Right ventricle myocardium superior (tissue), 1 donor: ENCODE measurements at regions of chr12 and their contacts with region 1.

Region 1: DNA sequence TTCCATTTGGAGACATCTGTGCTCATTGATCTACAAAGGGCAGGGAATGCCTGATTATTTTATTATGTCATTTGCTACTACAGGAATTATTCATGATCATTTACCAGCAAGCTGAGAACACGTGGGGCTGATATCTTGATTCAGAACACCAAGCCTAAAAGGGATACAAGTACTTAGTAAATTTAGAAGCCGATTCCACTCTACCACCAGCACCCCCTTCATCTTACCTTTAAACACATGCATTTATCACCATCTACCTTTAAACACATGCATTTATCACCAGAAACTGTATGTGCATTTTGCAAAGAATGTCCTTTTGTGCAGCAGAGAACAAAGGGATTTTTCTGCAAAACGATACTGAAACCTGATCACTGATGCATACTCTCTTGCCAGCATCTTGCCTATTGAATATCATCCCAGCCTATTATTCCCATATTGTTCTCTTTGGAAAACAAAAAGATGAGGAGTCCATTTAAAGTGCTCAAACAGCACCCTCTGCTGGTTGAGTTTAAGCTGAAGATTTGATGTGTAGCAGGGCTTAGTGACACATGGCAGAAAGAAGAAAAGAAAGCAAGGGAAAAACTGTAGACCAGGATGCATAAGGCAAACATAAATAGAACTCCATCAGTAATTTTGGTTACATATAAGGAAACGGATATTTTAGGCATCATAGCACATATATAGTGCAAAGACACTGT is 132.6 kb upstream of the PLEKHG7 start:
- DNase-seq: no peak
- ATAC-seq: peak; percentile 91

Region 2: DNA sequence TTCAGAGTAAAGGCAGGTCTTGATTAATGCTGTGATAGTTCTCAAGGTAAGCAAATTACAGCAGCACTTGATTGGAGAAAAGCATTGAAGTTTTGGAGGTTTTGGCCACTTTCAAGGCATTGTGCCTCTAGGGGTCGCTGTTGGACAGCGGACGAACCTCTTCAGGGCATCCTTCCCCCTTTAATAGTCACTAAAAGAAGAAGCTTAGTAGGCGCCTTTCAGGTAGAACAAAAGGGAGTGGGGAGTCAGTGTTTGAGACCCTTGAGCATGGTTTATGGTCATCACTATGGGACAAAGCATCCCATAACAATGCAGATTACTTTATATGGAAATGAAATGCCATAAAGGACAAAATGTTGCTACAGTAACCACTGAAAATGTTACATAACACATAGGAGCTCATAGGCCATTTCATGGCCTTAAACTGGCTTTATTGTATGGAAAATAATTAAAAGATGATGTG is 1188.1 kb before region 1 on chr12:
- intact Hi-C with region 1: loop called (anchors 5 kb)
- DNase-seq: peak; percentile 85
- ATAC-seq: peak; percentile 91

Region 3: DNA sequence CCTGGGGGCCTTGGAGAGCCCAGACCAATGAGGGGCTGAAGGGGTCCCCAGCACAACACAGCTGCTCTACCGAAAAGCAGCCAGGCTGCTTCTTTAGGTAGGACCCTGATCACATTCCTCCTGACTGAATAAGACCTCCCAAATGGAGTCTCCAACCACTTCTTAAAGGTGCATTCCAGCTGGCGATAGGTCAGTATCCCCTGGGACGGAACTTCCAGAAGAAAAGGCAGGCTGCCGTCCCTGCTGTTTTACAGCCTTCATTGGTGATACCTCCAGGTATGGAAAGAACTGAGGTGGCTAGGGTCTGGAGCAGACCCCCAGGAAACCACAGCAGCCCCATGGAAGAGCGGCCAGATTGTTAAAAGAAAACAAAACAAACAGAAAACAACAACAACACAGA is 765.2 kb before region 1 on chr12:
- intact Hi-C with region 1: loop called (anchors 5 kb)
- DNase-seq: no peak
- ATAC-seq: no peak

Region 4: DNA sequence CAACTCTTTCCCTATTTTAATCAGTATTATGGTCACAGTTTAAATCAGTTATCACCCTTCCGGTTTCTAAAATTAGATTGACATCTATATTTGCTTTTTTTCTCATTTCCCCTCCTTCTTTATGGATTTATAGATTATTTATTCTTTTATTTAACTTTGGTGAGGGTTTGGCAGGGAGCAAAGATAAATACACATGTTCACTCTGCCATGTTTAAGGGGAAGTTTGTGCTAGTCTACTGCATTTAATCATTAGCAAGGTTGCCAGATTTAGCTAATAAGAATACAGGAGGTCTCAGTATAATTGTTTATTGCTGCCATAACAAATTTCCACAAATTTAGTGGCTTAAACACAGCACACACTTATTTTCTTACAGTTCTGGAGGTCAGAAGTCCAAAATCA is 220.6 kb before region 1 on chr12:
- intact Hi-C with region 1: no loop called
- DNase-seq: no peak
- ATAC-seq: no peak

Region 5: DNA sequence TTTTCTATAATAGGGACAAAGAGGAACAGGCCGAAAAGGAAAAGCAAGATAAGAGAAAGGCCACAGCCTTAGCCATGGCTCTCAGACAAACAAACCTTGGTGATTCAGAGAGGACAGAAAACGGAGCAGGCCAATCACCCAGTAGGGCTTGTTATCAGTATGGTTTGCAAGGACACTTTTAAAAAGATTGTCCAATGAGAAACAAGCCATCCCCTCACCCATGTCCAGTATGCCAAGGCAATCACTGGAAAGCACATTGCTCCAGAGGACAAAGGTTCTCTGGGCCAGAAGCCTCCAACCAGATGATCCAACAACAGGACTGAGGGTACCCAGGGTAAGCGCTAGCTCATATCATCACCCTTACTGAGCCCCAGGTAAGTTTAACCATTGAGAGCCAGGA is 180.7 kb before region 1 on chr12:
- intact Hi-C with region 1: no loop called
- DNase-seq: no peak
- ATAC-seq: no peak

Region 6: DNA sequence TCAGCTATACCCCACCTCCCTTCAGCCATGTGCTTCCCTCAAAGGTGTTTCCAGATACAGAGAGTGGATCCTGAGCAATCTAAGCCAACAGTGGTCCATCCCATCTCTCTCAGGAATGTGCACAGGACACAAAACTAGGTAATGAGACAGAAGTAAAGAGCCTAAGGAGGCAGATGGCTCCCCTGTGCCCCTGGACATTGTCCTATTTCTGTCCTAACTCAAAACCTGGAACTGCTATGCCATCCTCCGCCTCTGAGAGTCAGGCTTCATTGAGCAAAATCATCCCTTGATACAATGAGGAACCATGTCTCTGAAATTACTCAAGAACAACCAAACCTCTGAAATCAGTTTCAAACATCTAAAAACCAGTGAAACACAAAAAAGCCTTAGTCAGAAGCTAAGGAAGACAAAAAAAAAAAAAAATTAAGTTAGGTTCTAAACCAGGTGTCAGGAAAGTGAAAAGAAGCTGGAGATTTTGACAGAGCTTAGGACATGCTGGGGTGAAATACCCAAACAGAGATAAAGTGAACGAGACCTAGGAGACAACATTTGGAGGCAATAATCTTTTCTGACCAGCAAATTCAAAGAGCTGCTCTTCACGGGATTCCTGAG is 67.7 kb before region 1 on chr12:
- intact Hi-C with region 1: loop called (anchors 2 kb)
- DNase-seq: no peak
- ATAC-seq: no peak

Region 7: GRCh38 chr12:92516277-92516600 is 54.0 kb before region 1 on chr12:
- intact Hi-C with region 1: no loop called
- DNase-seq: no peak
- ATAC-seq: no peak